ENCODE measurements at regions of chr11 and their contacts with region 1.

Region 1: DNA sequence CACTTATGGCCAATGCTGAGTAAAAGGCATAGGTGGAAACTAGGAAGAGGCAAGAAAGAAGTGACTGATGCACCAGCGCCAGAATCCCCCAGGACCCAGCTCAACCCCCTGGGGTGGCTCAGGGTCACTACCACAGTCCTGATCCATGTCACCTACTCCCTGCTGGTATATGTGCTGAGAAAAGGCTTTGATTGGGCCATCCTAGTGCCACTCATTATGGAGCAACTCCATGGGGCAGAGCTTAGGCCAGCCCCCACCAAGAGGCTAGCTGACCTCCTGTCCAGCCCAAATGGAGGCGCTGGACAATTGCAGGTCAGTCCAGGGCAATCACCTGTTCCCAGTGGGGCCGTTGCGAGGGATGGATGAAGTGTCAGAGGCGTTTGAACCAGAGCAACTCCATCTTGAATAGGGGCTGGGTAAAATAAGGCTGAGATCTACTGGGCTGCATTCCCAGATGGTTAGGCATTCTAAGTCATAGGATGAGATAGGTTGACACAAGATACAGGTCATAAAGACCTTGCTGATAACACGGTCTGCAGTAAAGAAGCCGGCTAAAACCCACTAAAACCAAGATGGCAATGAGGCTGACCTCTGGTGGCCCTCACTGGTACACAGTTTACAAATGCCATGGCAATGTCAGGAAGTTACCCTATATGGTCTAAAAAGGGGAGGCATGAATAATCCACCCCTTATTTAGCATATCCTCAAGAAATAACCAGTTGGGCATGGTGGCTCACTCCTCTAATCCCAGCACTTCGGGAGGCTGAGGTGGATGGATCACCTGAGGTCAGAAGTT is 20.6 kb upstream of the DAGLA start:
- DNase-seq: peak; percentile 22
- ATAC-seq: no peak
- H3K4me3 ChIP-seq: no peak overlapping the region
- H3K27ac ChIP-seq: no peak overlapping the region
- H3K4me1 ChIP-seq: peaks cover 7% of the 10 kb centered on the region
- H3K27me3 ChIP-seq: no peaks in the 10 kb centered on the region
- CTCF ChIP-seq: peak; percentile 34; the same call in 1 of the 2 replicates

Region 2: DNA sequence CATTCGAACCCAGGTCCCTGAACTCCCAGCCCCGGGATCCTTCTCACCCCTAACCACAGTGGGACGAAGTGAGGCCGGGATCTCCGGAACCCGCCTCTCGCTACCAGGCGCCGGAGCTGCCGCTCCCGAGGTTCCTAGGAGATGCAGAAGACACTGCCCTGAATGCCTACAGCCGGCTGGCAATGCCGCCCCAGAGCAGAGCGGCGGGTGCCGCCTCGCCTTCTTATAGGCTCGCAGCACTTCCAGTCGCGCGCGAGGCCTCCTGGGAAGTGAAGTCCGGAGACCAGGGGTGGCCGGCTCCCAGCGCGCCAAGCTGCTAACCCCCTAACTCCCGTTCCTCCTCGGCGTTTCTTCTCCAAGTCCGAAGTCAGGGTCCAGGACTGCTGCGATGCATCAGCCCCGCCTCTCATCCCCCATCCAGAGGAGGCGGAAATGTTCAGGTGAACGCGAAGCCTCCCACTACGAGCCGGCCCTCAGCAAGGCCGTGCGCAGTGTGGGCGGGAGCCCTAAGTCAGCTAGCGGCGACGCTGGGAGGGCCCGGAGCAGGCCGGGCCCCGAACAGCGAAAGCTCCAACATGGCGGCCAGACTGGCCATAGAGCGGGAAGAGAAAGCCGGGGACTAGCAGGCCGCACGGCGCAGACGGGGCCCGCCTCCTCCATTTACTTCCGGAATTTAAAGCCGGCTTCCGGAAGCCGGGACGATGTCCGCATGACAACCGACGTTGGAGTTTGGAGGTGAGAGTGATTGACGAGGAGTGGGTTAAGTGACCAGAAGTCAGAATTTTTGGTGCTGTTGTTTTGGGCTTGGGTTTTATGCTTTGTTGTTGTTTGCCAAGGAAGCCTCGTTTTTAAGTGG is 297.7 kb before region 1 on chr11 and contains the starts of genes CYB561A3 and TMEM138:
- CTCF ChIA-PET with region 1: no interaction called
- POLR2A ChIA-PET with region 1: no interaction called
- intact Hi-C with region 1: no loop called
- DNase-seq: peak; percentile 97
- ATAC-seq: peak; percentile 91
- H3K4me3 ChIP-seq: peak within 1 kb of the TSS; percentile 79
- H3K27ac ChIP-seq: peak within 1 kb of the TSS; percentile 93
- H3K4me1 ChIP-seq: peaks cover 17% of the 10 kb centered on the region
- H3K27me3 ChIP-seq: no peaks in the 10 kb centered on the region
- CTCF ChIP-seq: no peak
- total RNA-seq, gene CYB561A3: 51.2 and 58.2 TPM in 2 replicates
- total RNA-seq, gene TMEM138: 39.8 and 40.7 TPM in 2 replicates

Region 3: DNA sequence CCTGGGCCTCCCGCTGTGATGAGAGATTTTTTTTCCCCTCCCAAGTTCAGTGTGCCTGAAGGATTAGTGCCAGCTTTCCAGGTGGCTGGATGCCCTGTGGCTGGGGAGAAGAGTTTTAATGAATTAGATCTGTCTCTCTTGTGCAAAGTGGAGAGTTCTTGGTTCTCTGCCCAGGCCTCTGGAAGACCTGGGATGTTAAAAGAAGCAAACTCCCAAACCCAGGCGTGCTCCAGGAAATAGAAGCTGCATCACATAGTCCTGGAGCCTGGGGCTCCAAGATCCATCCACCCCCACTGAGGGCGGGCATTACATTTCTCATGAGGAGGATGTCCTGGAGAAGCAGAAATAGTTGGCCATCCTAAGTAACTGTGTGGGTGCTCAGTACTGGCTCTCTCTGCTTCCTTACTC is 199.1 kb before region 1 on chr11:
- CTCF ChIA-PET with region 1: no interaction called
- POLR2A ChIA-PET with region 1: interaction called, 10 read pairs
- intact Hi-C with region 1: no loop called
- DNase-seq: no peak
- ATAC-seq: no peak
- H3K4me3 ChIP-seq: no peak overlapping the region
- H3K27ac ChIP-seq: no peak overlapping the region
- H3K4me1 ChIP-seq: no peaks in the 10 kb centered on the region
- H3K27me3 ChIP-seq: no peaks in the 10 kb centered on the region
- CTCF ChIP-seq: no peak

Region 4: GRCh38 chr11:61627567-61628445 is 31.8 kb before region 1 on chr11:
- CTCF ChIA-PET with region 1: no interaction called
- POLR2A ChIA-PET with region 1: no interaction called
- intact Hi-C with region 1: no loop called
- DNase-seq: peak; percentile 89
- ATAC-seq: peak; percentile 78
- H3K4me3 ChIP-seq: no peak overlapping the region
- H3K27ac ChIP-seq: peak overlapping the region; percentile 85
- H3K4me1 ChIP-seq: peaks cover 23% of the 10 kb centered on the region
- H3K27me3 ChIP-seq: no peaks in the 10 kb centered on the region
- CTCF ChIP-seq: peak; percentile 98

Region 5: DNA sequence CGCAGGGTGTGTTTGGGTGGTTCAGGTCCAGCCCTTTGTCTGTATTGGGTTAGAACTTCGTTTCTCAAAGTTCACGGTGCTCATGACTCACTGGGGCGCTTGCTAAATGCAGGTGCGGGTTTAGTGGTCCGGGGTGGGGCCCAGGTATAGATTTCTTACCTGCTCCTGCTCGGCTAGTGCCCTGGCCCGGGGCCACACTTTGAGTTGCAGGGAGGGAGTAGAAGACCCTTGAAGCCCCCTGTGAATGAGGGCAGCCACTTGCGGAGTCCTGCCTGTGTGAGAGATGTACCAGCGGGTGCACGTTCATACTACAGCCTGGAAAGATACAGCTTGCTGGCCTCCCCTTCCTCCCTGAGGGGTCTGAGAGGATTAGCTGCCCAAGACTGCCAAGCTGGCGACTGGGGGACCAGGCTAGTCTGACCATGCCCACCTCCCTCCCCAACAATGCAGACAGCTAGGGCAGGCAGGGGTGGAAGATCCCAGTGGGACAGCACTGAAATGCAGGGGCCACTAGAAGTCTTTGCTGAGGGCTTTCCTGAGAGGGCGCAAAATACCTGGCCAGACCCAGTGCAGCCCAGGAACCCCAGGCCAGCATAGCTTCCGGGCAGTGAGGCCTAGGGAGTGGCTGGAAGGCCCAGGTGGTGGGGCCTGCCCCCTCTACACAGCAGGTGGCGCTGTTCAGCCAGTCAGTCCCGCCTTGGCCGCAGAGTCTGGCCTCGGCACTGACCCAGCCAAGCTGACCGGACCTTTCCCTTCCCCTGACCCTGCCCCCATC is 87.8 kb after region 1 on chr11:
- CTCF ChIA-PET with region 1: no interaction called
- POLR2A ChIA-PET with region 1: no interaction called
- intact Hi-C with region 1: no loop called
- DNase-seq: peak; percentile 78
- ATAC-seq: peak; percentile 89
- H3K4me3 ChIP-seq: no peak overlapping the region
- H3K27ac ChIP-seq: no peak overlapping the region
- H3K4me1 ChIP-seq: peaks cover 11% of the 10 kb centered on the region; the same call in 1 of the 2 replicates
- H3K27me3 ChIP-seq: no peaks in the 10 kb centered on the region
- CTCF ChIP-seq: peak; percentile 96

Measured in PC-3 (cell line).